ENCODE measurements at regions of chr18 and their contacts with region 1.

Region 1: DNA sequence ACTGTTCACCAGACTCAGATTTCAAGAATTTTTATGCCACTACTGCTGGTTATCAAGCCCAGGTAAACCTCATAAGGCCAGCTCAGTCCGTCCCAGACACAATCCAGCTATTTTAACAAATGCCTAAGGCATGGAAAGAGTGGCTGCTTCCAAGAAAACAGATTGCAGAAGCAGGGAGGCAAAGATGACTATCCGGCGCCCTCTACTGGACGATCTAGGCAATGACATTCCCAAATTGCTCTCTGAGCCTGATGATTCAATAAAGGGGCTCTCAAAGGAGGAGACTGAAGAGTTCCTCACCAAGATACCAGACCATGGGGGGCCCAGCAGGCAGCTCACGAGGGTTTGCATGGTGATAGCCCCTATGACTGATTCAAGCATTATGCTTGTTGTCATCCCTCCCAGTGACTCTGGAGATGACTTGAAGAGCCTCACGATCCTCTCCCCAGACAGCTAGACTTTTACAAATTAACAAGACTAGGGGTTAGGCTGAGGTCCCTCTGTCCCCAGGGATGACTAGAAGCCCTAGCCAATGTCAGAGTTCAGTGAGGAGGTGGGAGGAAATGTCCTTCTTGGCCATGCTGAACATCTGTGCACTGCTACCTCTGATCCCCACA is 25.0 kb downstream of the SERPINB8 start:
- DNase-seq: no peak
- H3K4me3 ChIP-seq: no peak overlapping the region
- CTCF ChIP-seq: peak; percentile 82

Region 2: DNA sequence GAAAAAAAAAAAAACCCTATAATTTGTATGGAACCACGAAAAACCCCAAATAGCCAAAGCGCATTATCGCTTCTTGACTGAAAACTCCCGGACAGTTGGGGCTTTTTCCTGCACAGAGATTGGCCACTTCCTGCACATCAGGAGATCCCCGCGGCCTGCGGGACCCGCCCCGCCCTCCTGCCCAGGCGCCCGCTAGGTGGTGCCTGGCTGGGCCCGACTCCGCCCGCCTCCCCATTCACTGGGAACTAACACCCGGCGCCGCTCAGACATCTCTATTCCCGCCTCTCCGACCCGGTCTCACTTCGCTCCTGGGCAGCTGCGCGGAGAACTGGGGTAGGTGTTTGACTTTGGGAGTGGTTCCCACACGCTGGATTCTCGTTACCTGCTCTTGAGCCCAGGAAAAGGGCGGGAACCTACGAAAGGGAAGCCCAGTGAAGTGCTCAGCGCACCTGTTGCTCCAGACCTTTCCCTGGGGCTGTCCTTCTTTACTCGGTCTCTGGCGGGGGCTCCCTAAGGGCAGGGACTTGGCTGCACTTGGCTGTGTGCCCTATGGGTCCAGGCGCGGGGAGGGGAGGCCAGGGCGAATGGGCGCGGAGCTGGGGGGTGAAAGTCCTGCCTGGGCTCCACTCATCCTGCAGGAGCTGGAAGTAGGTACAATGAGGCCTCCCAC is 45.7 kb before region 1 on chr18 and contains the start of gene HMSD:
- CTCF ChIA-PET with region 1: interaction called, 12 read pairs
- POLR2A ChIA-PET with region 1: no interaction called
- DNase-seq: no peak
- H3K4me3 ChIP-seq: peak within 1 kb of the TSS; percentile 56
- CTCF ChIP-seq: peak; percentile 47

Region 3: GRCh38 chr18:63963615-63964256 is 31.2 kb before region 1 on chr18:
- CTCF ChIA-PET with region 1: interaction called, 129 read pairs
- POLR2A ChIA-PET with region 1: interaction called, 3 read pairs
- DNase-seq: no peak
- H3K4me3 ChIP-seq: no peak overlapping the region
- CTCF ChIP-seq: peak; percentile 81

Region 4: DNA sequence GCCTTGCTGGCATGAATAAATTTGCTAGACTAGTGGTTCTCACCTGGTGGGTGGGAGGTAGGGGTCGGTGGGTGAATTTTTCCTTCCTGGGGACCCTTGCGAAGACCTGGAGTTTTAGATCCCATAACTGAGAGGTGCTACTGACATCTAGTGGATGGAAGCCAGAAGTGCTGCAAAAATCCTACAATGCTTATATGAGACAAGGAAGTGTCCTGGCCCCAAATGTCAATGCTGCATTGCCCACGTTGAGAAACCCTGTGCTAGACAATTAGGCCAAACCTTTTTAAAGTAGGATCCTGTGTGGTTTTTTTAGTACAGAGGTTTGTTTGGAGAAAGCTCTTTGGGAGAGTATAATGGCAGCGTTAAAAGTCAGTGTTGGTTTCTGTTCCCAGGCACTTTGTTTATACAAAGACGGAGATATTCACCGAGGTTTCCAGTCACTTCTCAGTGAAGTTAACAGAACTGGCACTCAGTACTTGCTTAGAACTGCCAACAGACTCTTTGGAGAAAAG is 15.4 kb before region 1 on chr18:
- CTCF ChIA-PET with region 1: interaction called, 66 read pairs
- POLR2A ChIA-PET with region 1: no interaction called
- DNase-seq: no peak
- H3K4me3 ChIP-seq: 0 out of 2 replicates have a peak overlapping the region, but pooled peaks have one; percentile 3
- CTCF ChIP-seq: peak; percentile 57

Region 5: GRCh38 chr18:64009305-64009704 is 14.4 kb after region 1 on chr18:
- CTCF ChIA-PET with region 1: interaction called, 48 read pairs
- POLR2A ChIA-PET with region 1: no interaction called
- DNase-seq: no peak
- H3K4me3 ChIP-seq: no peak overlapping the region
- CTCF ChIP-seq: no peak

Region 6: DNA sequence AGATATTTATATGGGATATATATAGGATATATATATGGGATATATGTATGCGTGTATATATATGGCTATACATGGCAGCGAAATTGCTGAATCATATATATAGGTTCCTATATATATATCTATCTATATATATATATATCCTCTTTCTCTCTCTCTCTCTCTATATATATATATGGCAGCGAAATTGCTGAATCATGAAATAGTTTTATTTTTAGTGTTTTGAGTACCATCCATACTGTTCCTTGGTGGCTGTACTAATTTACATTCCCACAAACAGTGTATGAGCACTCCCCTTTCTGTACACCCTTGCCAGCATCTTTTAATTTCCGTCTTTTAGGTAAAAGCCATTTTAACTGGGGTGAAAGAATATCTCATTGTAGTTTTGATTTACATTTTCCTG is 551.6 kb after region 1 on chr18:
- CTCF ChIA-PET with region 1: no interaction called
- POLR2A ChIA-PET with region 1: no interaction called
- DNase-seq: no peak
- H3K4me3 ChIP-seq: no peak overlapping the region
- CTCF ChIP-seq: no peak